Heart left ventricle (tissue), 16 donors: ENCODE measurements at regions of chr1 and their contacts with region 1.

Region 1: GRCh38 chr1:229370601-229371021 is 27.8 kb upstream of the CCSAP start:
- DNase-seq: peak in 4 of 5 donors; percentile 81 to 91 (median 85)
- ATAC-seq: peak; percentile 97 to 98 (median 98)
- H3K4me3 ChIP-seq: no peak overlapping the region
- H3K27ac ChIP-seq: peak overlapping the region in 8 of 12 donors; percentile 19 to 73 (median 64)
- H3K4me1 ChIP-seq: peaks cover 0 to 7% (median 0%) of the 10 kb centered on the region in 12 donors
- H3K27me3 ChIP-seq: no peaks in the 10 kb centered on the region
- CTCF ChIP-seq: peak in 9 of 12 donors; percentile 18 to 47 (median 33)
- POLR2A ChIP-seq: no peak

Region 2: DNA sequence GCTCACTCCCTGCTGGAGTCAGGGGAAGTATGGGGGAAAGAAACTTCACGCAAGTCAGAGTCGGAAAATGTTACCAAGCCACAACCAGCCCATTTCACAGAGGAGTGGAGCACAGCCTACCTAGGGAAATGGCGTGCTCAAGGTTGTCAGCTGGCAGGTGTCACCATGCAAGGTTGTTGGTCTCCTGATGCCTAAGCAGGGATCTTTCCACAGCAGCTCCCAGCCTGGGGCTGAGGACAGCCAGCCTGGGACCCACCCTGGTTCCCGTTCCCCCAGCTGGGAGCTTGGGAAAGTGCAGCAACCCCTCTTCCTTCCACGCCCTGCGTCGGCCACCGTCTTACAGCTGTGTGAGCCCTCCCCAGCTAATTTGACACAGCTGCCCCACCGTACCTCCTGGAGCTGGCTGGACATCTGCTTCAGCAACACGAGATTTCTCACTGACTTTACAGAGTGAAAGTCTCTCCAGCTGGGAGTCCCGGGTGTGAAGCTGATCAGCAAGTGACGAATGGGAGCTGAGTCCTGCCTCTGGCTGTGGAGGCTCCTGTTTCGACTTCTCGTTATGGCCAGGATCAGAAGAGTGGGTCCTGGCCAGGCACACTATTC is 324.3 kb before region 1 on chr1:
- intact Hi-C with region 1: no loop called
- DNase-seq: no peak
- ATAC-seq: peak; percentile 13 to 32 (median 28)
- H3K4me3 ChIP-seq: no peak overlapping the region
- H3K27ac ChIP-seq: no peak overlapping the region
- H3K4me1 ChIP-seq: peaks cover 0 to 14% (median 0%) of the 10 kb centered on the region in 12 donors
- H3K27me3 ChIP-seq: peaks cover 0 to 14% (median 3%) of the 10 kb centered on the region in 9 donors
- CTCF ChIP-seq: no peak
- POLR2A ChIP-seq: no peak

Region 3: GRCh38 chr1:229410692-229411443 is 40.3 kb after region 1 on chr1:
- intact Hi-C with region 1: loop called in 3 of 10 experiments (anchors 2 to 5 kb)
- DNase-seq: peak; percentile 80 to 90 (median 83)
- ATAC-seq: peak; percentile 66 to 84 (median 80)
- H3K4me3 ChIP-seq: peak overlapping the region in 7 of 12 donors; percentile 5 to 42 (median 30)
- H3K27ac ChIP-seq: peak overlapping the region; percentile 50 to 98 (median 92)
- H3K4me1 ChIP-seq: peaks cover 3 to 51% (median 37%) of the 10 kb centered on the region in 12 donors
- H3K27me3 ChIP-seq: peaks cover 0 to 43% (median 24%) of the 10 kb centered on the region in 9 donors
- CTCF ChIP-seq: no peak
- POLR2A ChIP-seq: no peak

Region 4: GRCh38 chr1:229430761-229431283 is 60.2 kb after region 1 on chr1:
- intact Hi-C with region 1: loop called in 1 of 10 experiments (anchors 5 kb)
- DNase-seq: peak; percentile 61 to 83 (median 80)
- ATAC-seq: peak; percentile 18 to 49 (median 32)
- H3K4me3 ChIP-seq: peak overlapping the region in 9 of 12 donors; percentile 13 to 72 (median 54)
- H3K27ac ChIP-seq: peak overlapping the region in 8 of 12 donors; percentile 5 to 98 (median 92)
- H3K4me1 ChIP-seq: peaks cover 0 to 50% (median 17%) of the 10 kb centered on the region in 12 donors
- H3K27me3 ChIP-seq: peaks cover 19 to 85% (median 51%) of the 10 kb centered on the region in 9 donors
- CTCF ChIP-seq: peak in 1 of 12 donors; percentile 26
- POLR2A ChIP-seq: no peak

Region 5: GRCh38 chr1:229479660-229480399 is 109.2 kb after region 1 on chr1:
- intact Hi-C with region 1: loop called in 3 of 10 experiments (anchors 2 to 10 kb)
- DNase-seq: no peak
- ATAC-seq: peak in 1 of 4 donors; percentile 51
- H3K4me3 ChIP-seq: no peak overlapping the region
- H3K27ac ChIP-seq: no peak overlapping the region
- H3K4me1 ChIP-seq: peaks cover 0 to 18% (median 0%) of the 10 kb centered on the region in 12 donors
- H3K27me3 ChIP-seq: no peaks in the 10 kb centered on the region
- CTCF ChIP-seq: no peak
- POLR2A ChIP-seq: no peak